Calu3 (cell line): ENCODE measurements at regions of chr6 and their contacts with region 1.

Region 1: GRCh38 chr6:28747631-28748157 is 176.1 kb downstream of the TRIM27 start:
- DNase-seq: peak; percentile 87
- H3K4me3 Mint-ChIP-seq: peak overlapping the region; percentile 67
- H3K27ac Mint-ChIP-seq: peak overlapping the region; percentile 82
- H3K4me1 Mint-ChIP-seq: peaks cover 12% of the 10 kb centered on the region
- H3K27me3 Mint-ChIP-seq: no peaks in the 10 kb centered on the region
- CTCF ChIP-seq: no peak

Region 2: GRCh38 chr6:28725890-28726348 is 21.8 kb before region 1 on chr6:
- CTCF ChIA-PET with region 1: interaction called, 4 read pairs
- intact Hi-C with region 1: loop called (anchors 2 kb)
- DNase-seq: peak; percentile 38
- H3K4me3 Mint-ChIP-seq: no peak overlapping the region
- H3K27ac Mint-ChIP-seq: no peak overlapping the region
- H3K4me1 Mint-ChIP-seq: no peaks in the 10 kb centered on the region
- H3K27me3 Mint-ChIP-seq: peaks cover under 1% of the 10 kb centered on the region
- CTCF ChIP-seq: no peak

Region 3: GRCh38 chr6:28765978-28766351 is 18.3 kb after region 1 on chr6:
- CTCF ChIA-PET with region 1: interaction called, 10 read pairs
- intact Hi-C with region 1: no loop called
- DNase-seq: no peak
- H3K4me3 Mint-ChIP-seq: peak overlapping the region; percentile 52
- H3K27ac Mint-ChIP-seq: no peak overlapping the region
- H3K4me1 Mint-ChIP-seq: peaks cover 19% of the 10 kb centered on the region
- H3K27me3 Mint-ChIP-seq: peaks cover 68% of the 10 kb centered on the region
- CTCF ChIP-seq: no peak

Region 4: GRCh38 chr6:28856620-28857005 is 108.9 kb after region 1 on chr6:
- CTCF ChIA-PET with region 1: no interaction called
- intact Hi-C with region 1: no loop called
- DNase-seq: no peak
- H3K4me3 Mint-ChIP-seq: no peak overlapping the region
- H3K27ac Mint-ChIP-seq: no peak overlapping the region
- H3K4me1 Mint-ChIP-seq: peaks cover 10% of the 10 kb centered on the region
- H3K27me3 Mint-ChIP-seq: peaks cover 29% of the 10 kb centered on the region
- CTCF ChIP-seq: no peak